Esophagus squamous epithelium (tissue), 5 donors: ENCODE measurements at regions of chr9 and their contacts with region 1.

Region 1: DNA sequence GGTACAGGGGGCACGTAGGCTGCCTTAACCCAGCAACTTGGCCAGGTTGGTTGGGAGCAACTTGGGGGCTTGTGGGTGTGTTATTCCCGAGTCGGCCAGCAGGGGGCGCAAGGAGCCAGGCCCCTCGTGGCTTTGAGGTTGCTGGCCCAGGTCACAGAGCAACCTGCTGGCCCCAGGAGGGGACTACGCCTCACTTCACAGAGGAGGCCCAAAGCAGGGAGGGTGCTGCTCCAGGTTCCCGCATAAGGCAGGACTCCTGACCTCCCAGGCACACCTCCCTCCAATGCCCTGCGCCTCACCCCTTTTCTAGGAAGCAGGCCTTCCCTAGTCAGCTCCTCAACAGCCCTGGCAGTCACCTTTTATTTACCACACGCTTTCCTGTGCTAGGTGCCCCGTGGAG is 18.1 kb downstream of the KYAT1 start:
- DNase-seq: no peak
- H3K4me3 ChIP-seq: no peak overlapping the region
- H3K27ac ChIP-seq: peak overlapping the region; percentile 14 to 81 (median 44)
- H3K4me1 ChIP-seq: peaks cover 6 to 52% (median 28%) of the 10 kb centered on the region in 3 donors
- H3K27me3 ChIP-seq: no peaks in the 10 kb centered on the region
- CTCF ChIP-seq: peak; percentile 93 to 99 (median 97)
- POLR2A ChIP-seq: no peak

Region 2: DNA sequence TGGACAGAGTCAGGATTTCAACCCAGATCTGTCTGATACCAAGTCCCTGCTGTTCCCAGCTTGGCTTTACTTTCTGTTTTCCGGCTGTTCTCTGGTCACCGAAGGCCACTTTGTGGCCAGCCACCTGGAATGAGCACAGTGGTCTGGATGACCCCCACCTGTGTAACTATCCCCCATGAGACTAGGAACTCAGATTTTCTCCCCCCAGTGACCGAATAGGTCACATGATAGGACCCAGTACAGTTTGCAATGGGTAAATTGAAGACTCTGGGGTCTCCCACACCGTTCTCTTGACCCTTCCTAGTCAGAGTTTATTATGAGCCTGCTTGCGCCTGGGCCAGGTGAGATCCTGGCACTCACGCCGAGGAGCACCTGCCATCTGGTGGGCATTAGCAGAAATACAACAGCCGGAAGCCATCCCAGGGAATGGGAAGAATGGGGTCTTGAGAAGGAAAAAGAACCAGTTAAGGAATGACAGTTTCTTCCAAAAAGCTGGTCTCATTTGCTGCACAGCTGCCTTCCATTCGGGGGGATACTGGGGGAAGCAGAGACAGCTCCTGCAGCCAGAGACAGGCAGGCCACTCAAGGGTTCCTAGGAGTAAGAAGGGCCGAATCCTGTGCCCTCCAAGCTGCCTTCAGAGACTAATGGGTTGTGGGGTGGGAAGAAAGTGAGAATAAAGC is 64.2 kb after region 1 on chr9:
- intact Hi-C with region 1: loop called (anchors 5 kb)
- DNase-seq: no peak
- H3K4me3 ChIP-seq: no peak overlapping the region
- H3K27ac ChIP-seq: peak overlapping the region in 3 of 4 donors; percentile 4 to 54 (median 21)
- H3K4me1 ChIP-seq: peaks cover 4 to 25% (median 11%) of the 10 kb centered on the region in 3 donors
- H3K27me3 ChIP-seq: no peaks in the 10 kb centered on the region
- CTCF ChIP-seq: peak; percentile 88 to 94 (median 92)
- POLR2A ChIP-seq: no peak